ENCODE measurements at regions of chr1 and their contacts with region 1.

Region 1: GRCh38 chr1:155084722-155085503 is 6.3 kb downstream of the EFNA3 start:
- DNase-seq: peak; percentile 87 to 99 (median 92)

Region 2: GRCh38 chr1:155050560-155051341 is 34.2 kb before region 1 on chr1 and contains the start of gene ADAM15:
- intact Hi-C with region 1: loop called (anchors 2 kb)
- DNase-seq: peak; percentile 60 to 96 (median 81)

Region 3: GRCh38 chr1:155193275-155193990 is 108.5 kb after region 1 on chr1:
- intact Hi-C with region 1: no loop called
- DNase-seq: peak; percentile 54 to 96 (median 78)